CD8-positive, alpha-beta memory T cell (primary cell): ENCODE measurements at regions of chr19 and their contacts with region 1.

Region 1: GRCh38 chr19:41263850-41264580 is at the start of gene HNRNPUL1:
- DNase-seq: peak; percentile 98 to 100 (median 100)
- H3K4me3 ChIP-seq: peak within 1 kb of the TSS; percentile 82
- H3K4me3 Mint-ChIP-seq: peak within 1 kb of the TSS; percentile 91 to 99 (median 97)
- H3K27ac ChIP-seq: peak within 1 kb of the TSS; percentile 100
- H3K27ac Mint-ChIP-seq: peak within 1 kb of the TSS; percentile 99 to 100 (median 100)
- H3K4me1 ChIP-seq: peaks cover 34% of the 10 kb centered on the region
- H3K4me1 Mint-ChIP-seq: peaks cover 37 to 57% (median 47%) of the 10 kb centered on the region in 3 donors
- H3K27me3 ChIP-seq: no peaks in the 10 kb centered on the region
- H3K27me3 Mint-ChIP-seq: peaks cover 0 to 19% of the 10 kb centered on the region in 2 donors
- total RNA-seq, gene HNRNPUL1: 270 to 279 TPM

Region 2: GRCh38 chr19:41206926-41207750 is 56.9 kb before region 1 on chr19:
- CTCF ChIA-PET with region 1: interaction called, 96 read pairs
- POLR2A ChIA-PET with region 1: interaction called, 19 read pairs
- DNase-seq: no peak
- H3K4me3 ChIP-seq: no peak overlapping the region
- H3K4me3 Mint-ChIP-seq: no peak overlapping the region
- H3K27ac ChIP-seq: no peak overlapping the region
- H3K27ac Mint-ChIP-seq: peak overlapping the region in 5 of 8 donors; percentile 54 to 96 (median 75)
- H3K4me1 ChIP-seq: no peaks in the 10 kb centered on the region
- H3K4me1 Mint-ChIP-seq: peaks cover 3 to 5% (median 4%) of the 10 kb centered on the region in 3 donors
- H3K27me3 ChIP-seq: no peaks in the 10 kb centered on the region
- H3K27me3 Mint-ChIP-seq: peaks cover 2 to 3% of the 10 kb centered on the region in 2 donors

Region 3: DNA sequence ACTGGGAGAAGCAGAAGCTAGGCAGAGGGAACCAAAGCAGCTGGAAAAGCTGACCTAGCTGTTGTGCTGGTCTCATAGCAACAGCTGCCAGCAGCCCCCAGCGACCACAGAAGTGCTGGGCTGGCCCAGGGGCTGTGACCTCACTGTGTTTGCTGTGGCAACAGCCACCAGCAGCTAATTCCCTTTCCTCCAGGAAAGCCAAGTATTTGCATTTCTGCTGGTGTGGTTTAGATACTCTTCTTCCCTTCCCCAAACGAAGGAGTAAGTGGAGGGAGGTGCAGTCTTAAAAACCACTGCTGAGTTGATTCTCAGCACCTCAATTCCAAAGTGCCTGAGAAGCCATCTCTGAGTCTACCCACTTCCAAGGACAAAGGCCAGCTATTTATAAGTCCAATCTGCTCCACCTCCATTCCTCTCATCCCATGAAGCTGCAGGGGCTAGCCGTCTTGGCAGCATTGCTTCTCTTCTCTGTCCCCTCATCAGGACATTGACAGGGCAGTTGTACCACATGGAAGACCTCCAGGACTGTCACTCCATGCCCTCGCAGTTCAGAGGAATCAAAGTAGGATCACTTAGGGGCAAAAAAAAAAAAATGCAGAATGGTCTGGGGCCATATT is 34.4 kb after region 1 on chr19:
- CTCF ChIA-PET with region 1: interaction called, 101 read pairs
- POLR2A ChIA-PET with region 1: interaction called, 128 read pairs
- DNase-seq: peak; percentile 45 to 78 (median 56)
- H3K4me3 ChIP-seq: no peak overlapping the region
- H3K4me3 Mint-ChIP-seq: peak overlapping the region; percentile 37 to 67 (median 64)
- H3K27ac ChIP-seq: peak overlapping the region; percentile 68
- H3K27ac Mint-ChIP-seq: peak overlapping the region; percentile 96 to 100 (median 98)
- H3K4me1 ChIP-seq: peaks cover 77% of the 10 kb centered on the region
- H3K4me1 Mint-ChIP-seq: peaks cover 80 to 93% (median 90%) of the 10 kb centered on the region in 3 donors
- H3K27me3 ChIP-seq: no peaks in the 10 kb centered on the region
- H3K27me3 Mint-ChIP-seq: no peaks in the 10 kb centered on the region

Region 4: DNA sequence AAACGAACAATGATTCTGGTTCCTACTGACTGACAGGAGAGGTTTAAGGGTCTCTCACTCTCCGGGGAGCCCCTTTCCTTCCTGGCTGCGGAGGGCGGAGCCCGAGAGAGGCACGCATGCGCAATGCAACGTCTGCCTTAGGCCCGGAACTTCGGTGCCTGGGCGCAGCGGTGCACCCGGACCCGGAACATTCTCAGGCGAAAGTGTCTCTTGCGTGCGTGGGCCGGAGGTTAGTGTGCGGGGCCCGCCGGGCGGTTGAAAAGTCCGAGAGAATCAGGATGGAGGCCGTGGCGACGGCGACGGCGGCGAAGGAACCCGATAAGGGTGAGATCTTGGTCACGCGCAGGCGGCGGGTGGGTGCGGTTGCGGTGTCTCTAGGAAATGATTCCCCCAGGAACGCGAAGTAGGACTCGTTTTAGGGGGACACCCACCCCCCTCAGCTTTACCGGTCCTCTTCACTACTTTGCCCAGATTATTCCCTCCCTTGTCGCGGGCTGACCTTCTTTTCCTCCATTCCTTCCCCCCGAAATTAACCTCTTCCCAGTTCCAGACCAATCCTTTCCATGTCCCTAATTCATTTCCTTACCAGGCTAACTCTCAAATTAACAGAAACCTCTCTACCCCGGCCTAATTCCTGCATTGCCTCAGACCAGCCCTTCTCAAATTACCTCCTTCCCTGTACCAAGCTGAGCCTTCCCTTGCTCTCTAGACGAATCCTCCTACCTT is 46.2 kb after region 1 on chr19 and contains the start of gene CCDC97:
- CTCF ChIA-PET with region 1: interaction called, 101 read pairs
- POLR2A ChIA-PET with region 1: interaction called, 128 read pairs
- DNase-seq: peak; percentile 81 to 94 (median 89)
- H3K4me3 ChIP-seq: peak within 1 kb of the TSS; percentile 93
- H3K4me3 Mint-ChIP-seq: peak within 1 kb of the TSS; percentile 94 to 100 (median 98)
- H3K27ac ChIP-seq: peak within 1 kb of the TSS; percentile 90
- H3K27ac Mint-ChIP-seq: peak within 1 kb of the TSS; percentile 93 to 100 (median 98)
- H3K4me1 ChIP-seq: peaks cover 60% of the 10 kb centered on the region
- H3K4me1 Mint-ChIP-seq: peaks cover 68 to 93% (median 87%) of the 10 kb centered on the region in 3 donors
- H3K27me3 ChIP-seq: no peaks in the 10 kb centered on the region
- H3K27me3 Mint-ChIP-seq: peaks cover 0 to 8% of the 10 kb centered on the region in 2 donors
- total RNA-seq, gene CCDC97: 31.7 to 32.1 TPM

Region 5: DNA sequence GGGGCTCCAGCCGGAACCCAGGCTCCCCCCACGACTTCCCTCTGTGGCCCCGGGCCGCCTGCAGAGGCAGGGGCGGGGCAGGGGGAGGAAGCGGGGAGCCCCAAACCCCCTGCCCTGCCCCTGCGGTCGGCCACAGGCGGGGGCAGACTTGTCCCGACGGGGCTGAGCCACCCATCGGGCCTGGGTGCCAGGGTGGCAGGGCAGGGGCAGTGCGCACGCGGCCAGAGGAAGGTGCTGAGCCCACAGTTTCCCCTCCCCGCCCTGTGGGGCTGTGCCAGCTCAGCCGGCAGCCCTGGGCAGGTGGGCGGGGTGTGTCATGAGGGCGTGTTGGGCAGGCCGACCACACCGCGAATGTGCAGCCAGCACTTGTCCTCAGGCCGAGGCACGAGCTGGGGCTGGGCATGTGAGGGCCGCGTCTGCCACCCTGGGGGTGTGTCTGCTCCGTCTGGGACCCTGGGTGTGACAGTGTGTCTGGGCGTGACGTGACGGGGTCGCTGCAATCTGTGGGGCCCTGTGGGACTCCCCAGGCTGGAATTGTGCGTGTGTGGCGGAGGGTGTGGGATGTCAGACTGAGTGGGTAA is 63.7 kb after region 1 on chr19:
- CTCF ChIA-PET with region 1: interaction called, 3 read pairs
- POLR2A ChIA-PET with region 1: interaction called, 23 read pairs
- DNase-seq: peak; percentile 81 to 97 (median 92)
- H3K4me3 ChIP-seq: peak overlapping the region; percentile 64
- H3K4me3 Mint-ChIP-seq: peak overlapping the region; percentile 73 to 89 (median 80)
- H3K27ac ChIP-seq: peak overlapping the region; percentile 80
- H3K27ac Mint-ChIP-seq: peak overlapping the region; percentile 97 to 100 (median 100)
- H3K4me1 ChIP-seq: peaks cover 69% of the 10 kb centered on the region
- H3K4me1 Mint-ChIP-seq: peaks cover 68 to 82% (median 70%) of the 10 kb centered on the region in 3 donors
- H3K27me3 ChIP-seq: no peaks in the 10 kb centered on the region
- H3K27me3 Mint-ChIP-seq: peaks cover 0 to 9% of the 10 kb centered on the region in 2 donors

Region 6: DNA sequence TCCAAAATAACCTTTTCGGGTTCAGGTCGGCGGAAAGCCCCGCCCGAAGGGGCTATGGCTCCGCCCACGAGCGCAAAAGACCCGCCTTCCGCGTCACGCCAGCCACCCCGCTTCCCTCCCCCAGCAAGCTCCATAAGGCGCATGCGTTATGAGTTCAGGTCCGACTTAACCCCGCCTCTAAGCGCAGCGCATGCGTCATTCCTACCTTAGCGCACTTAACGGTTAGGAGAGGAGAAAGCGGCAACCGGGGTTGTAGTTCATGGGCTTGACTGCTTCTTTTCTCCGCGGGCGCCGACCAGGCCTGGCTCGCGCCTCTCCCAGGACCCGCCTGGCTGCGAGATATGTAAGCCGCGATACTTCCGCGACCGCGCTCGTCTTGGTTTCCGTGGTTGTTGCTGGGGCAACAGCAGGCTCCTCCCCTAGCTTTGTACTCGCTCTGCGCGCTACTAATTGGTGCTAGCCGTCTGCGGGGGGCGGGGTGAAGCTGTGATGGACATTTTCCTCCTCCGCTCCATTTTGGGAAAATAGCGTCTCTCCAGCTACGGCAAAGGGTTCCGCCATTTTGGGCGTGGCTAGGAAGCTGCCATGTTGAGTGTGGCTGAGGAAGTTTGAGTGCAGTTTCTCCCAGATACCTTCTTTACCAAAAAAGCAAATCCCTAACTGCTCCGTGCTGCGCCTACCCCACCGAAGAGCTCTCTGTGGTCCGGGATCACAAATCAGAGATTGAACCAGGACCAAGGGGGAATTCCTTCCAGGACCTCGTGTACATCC is 99.9 kb after region 1 on chr19 and contains the start of gene B9D2:
- CTCF ChIA-PET with region 1: interaction called, 11 read pairs
- POLR2A ChIA-PET with region 1: interaction called, 19 read pairs
- DNase-seq: peak; percentile 96 to 99 (median 99)
- H3K4me3 ChIP-seq: peak within 1 kb of the TSS; percentile 95
- H3K4me3 Mint-ChIP-seq: peak within 1 kb of the TSS; percentile 87 to 98 (median 97)
- H3K27ac ChIP-seq: peak within 1 kb of the TSS; percentile 100
- H3K27ac Mint-ChIP-seq: peak within 1 kb of the TSS; percentile 99 to 100 (median 100)
- H3K4me1 ChIP-seq: peaks cover 22% of the 10 kb centered on the region
- H3K4me1 Mint-ChIP-seq: peaks cover 23 to 40% (median 26%) of the 10 kb centered on the region in 3 donors
- H3K27me3 ChIP-seq: no peaks in the 10 kb centered on the region
- H3K27me3 Mint-ChIP-seq: peaks cover 0 to 2% of the 10 kb centered on the region in 2 donors
- total RNA-seq, gene B9D2: 8.5 to 9.7 TPM

Region 7: DNA sequence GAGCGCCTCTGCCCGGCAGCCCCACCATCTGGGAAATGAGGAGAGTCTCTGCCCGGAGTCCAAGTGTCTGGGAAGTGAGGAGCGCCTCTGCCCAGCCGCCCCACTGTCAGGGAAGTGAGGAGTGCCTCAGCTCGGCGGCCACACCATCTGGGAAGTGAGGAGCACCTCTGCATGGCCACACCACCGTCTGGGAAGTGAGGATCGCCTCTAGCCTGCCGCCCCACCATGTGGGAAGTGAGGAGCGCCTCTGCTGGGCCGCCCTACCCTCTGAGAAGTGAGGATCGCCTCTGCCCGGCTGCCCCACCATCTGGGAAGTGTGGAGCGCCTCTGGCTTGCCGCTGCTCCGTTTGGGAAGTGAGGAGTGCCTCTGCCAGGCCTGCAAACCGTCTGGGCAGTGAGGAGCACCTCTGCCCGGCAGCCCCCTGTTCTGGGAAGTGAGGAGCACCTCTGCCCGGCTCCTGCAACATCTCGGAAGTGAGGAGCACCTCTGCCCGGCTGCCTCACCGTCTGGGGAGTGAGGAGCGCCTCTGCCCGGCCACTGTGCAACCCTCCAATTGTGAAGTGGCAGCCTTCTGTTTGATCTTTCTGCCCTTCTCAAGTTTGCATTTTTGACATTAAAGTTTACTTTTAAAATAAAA is 251.1 kb after region 1 on chr19:
- CTCF ChIA-PET with region 1: no interaction called
- POLR2A ChIA-PET with region 1: no interaction called
- DNase-seq: no peak
- H3K4me3 ChIP-seq: no peak overlapping the region
- H3K4me3 Mint-ChIP-seq: no peak overlapping the region
- H3K27ac ChIP-seq: no peak overlapping the region
- H3K27ac Mint-ChIP-seq: no peak overlapping the region
- H3K4me1 ChIP-seq: peaks cover 4% of the 10 kb centered on the region
- H3K4me1 Mint-ChIP-seq: peaks cover 0 to 13% (median 6%) of the 10 kb centered on the region in 3 donors
- H3K27me3 ChIP-seq: peaks cover 11% of the 10 kb centered on the region
- H3K27me3 Mint-ChIP-seq: peaks cover 30 to 86% of the 10 kb centered on the region in 2 donors

Region 8: DNA sequence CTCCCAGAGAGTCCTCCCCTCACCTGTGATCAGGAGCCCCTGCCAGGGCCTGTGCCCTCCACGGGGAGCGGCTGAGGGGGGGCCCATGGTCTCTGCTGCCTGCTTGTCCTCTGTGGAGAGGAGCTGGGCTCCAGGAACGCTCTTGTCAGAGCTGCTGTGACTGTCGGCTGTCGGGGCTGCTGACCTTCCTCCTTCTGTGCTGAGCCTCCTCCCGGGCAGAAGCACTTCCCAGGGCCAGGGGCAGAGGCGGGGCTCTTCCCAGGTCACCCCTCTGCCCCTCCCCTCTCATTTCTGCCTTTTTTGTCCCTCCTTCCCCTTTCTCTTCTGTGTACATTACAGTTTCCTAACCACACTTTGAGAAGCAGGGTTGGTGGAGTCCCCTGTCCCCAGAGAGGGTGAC is 362.9 kb after region 1 on chr19 and contains the start of gene CEACAM4:
- CTCF ChIA-PET with region 1: no interaction called
- POLR2A ChIA-PET with region 1: no interaction called
- DNase-seq: no peak
- H3K4me3 ChIP-seq: no peak within 1 kb of the TSS
- H3K4me3 Mint-ChIP-seq: no peak within 1 kb of the TSS
- H3K27ac ChIP-seq: no peak within 1 kb of the TSS
- H3K27ac Mint-ChIP-seq: no peak within 1 kb of the TSS
- H3K4me1 ChIP-seq: no peaks in the 10 kb centered on the region
- H3K4me1 Mint-ChIP-seq: no peaks in the 10 kb centered on the region
- H3K27me3 ChIP-seq: peaks cover 8% of the 10 kb centered on the region
- H3K27me3 Mint-ChIP-seq: peaks cover 26 to 63% of the 10 kb centered on the region in 2 donors
- total RNA-seq, gene CEACAM4: not detected